ENCODE measurements at regions of chr3 and their contacts with region 1.

Region 1: GRCh38 chr3:194824701-194825111 is 139.0 kb downstream of the FAM43A start:
- DNase-seq: no peak
- ATAC-seq: no peak
- H3K4me3 ChIP-seq: no peak overlapping the region
- H3K4me3 Mint-ChIP-seq: no peak overlapping the region
- H3K27ac ChIP-seq: no peak overlapping the region
- H3K27ac Mint-ChIP-seq: no peak overlapping the region
- H3K4me1 ChIP-seq: no peaks in the 10 kb centered on the region
- H3K4me1 Mint-ChIP-seq: no peaks in the 10 kb centered on the region
- H3K27me3 ChIP-seq: no peaks in the 10 kb centered on the region
- H3K27me3 Mint-ChIP-seq: no peaks in the 10 kb centered on the region
- CTCF ChIP-seq: no peak

Region 2: GRCh38 chr3:194395778-194396547 is 428.7 kb before region 1 on chr3:
- CTCF ChIA-PET with region 1: no interaction called
- POLR2A ChIA-PET with region 1: no interaction called
- intact Hi-C with region 1: no loop called
- DNase-seq: peak; percentile 40 to 81 (median 62)
- ATAC-seq: peak; percentile 79
- H3K4me3 ChIP-seq: peak overlapping the region; percentile 63
- H3K4me3 Mint-ChIP-seq: peak overlapping the region; percentile 90
- H3K27ac ChIP-seq: peak overlapping the region in 1 of 2 donors; percentile 50
- H3K27ac Mint-ChIP-seq: peak overlapping the region; percentile 94
- H3K4me1 ChIP-seq: peaks cover 39% of the 10 kb centered on the region
- H3K4me1 Mint-ChIP-seq: peaks cover 56% of the 10 kb centered on the region
- H3K27me3 ChIP-seq: peaks cover 0 to 10% of the 10 kb centered on the region in 2 experiments
- H3K27me3 Mint-ChIP-seq: no peaks in the 10 kb centered on the region
- CTCF ChIP-seq: no peak

Region 3: GRCh38 chr3:195040773-195041520 is 216.2 kb after region 1 on chr3:
- CTCF ChIA-PET with region 1: no interaction called
- POLR2A ChIA-PET with region 1: no interaction called
- intact Hi-C with region 1: loop called in 1 of 2 experiments (anchors 10 kb)
- DNase-seq: peak in 1 of 14 experiments; percentile 15
- ATAC-seq: no peak
- H3K4me3 ChIP-seq: no peak overlapping the region
- H3K4me3 Mint-ChIP-seq: no peak overlapping the region
- H3K27ac ChIP-seq: no peak overlapping the region
- H3K27ac Mint-ChIP-seq: no peak overlapping the region
- H3K4me1 ChIP-seq: no peaks in the 10 kb centered on the region
- H3K4me1 Mint-ChIP-seq: no peaks in the 10 kb centered on the region
- H3K27me3 ChIP-seq: no peaks in the 10 kb centered on the region
- H3K27me3 Mint-ChIP-seq: no peaks in the 10 kb centered on the region
- CTCF ChIP-seq: no peak

Region 4: DNA sequence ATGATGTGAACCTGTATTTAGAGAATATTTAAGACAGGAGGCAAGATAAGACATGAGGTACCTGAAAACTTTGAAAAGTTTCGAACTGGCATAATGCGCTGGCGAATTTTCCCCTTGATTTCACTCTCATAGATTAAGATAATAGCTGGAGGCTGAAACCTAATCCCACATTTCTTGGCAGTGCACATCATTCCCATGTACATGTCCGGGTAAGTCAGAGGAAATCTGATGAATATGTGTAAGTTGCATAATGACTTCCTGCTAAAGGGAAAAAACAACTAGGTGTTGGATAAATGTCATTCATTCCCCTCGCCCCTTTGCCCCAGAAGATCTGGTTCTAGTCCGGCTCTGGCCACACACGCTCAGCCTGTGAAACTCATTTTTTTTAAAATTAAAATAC is 1883.8 kb after region 1 on chr3:
- CTCF ChIA-PET with region 1: no interaction called
- POLR2A ChIA-PET with region 1: no interaction called
- intact Hi-C with region 1: no loop called
- DNase-seq: no peak
- ATAC-seq: no peak
- H3K4me3 ChIP-seq: no peak overlapping the region
- H3K4me3 Mint-ChIP-seq: no peak overlapping the region
- H3K27ac ChIP-seq: no peak overlapping the region
- H3K27ac Mint-ChIP-seq: peak overlapping the region; percentile 40
- H3K4me1 ChIP-seq: peaks cover 22% of the 10 kb centered on the region
- H3K4me1 Mint-ChIP-seq: peaks cover 21% of the 10 kb centered on the region
- H3K27me3 ChIP-seq: no peaks in the 10 kb centered on the region
- H3K27me3 Mint-ChIP-seq: no peaks in the 10 kb centered on the region
- CTCF ChIP-seq: no peak